AG04450 (cell line): ENCODE measurements at regions of chr18 and their contacts with region 1.

Region 1: DNA sequence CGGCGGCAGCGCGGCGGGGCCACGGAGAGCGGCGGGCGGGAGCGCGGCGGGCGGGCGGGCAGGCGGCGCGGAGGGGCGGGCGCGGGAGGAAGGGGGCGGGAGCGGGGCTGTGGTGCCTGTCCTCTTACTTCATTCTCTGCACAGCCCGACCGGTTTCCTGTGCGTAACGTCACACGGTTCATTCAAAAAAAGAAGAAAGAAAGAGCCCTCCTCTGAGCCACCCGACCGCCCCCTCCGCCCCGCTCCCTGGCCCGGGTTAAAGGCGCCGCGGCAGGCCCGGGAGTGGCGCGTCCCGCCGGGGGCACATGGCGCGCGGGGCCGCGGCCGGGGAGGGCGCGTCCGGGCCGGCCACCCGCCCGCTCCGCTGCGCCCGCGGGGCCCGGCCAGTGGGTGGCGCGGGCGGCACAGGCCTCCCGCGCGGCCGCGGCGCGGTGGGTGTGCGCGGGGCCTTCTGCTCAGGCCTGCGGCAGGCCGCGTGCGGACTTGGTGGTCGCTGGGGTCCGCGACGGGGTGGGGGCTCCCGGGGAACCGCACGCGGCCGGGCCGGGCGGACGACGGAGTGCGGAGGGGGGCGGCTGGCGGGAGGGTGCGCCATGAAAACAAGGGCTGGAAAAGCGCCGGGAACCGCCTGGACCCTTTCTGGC is 599 bp upstream of the BCL2 start:
- DNase-seq: peak; percentile 41
- H3K4me3 ChIP-seq: peak overlapping the region; percentile 70
- H3K27ac ChIP-seq: no peak overlapping the region
- H3K27me3 ChIP-seq: peaks cover 19% of the 10 kb centered on the region
- CTCF ChIP-seq: no peak

Region 2: GRCh38 chr18:63016270-63016669 is 303.9 kb before region 1 on chr18:
- CTCF ChIA-PET with region 1: interaction called, 77 read pairs
- POLR2A ChIA-PET with region 1: interaction called, 4 read pairs
- DNase-seq: peak; percentile 15
- H3K4me3 ChIP-seq: no peak overlapping the region
- H3K27ac ChIP-seq: no peak overlapping the region
- H3K27me3 ChIP-seq: peaks cover 7% of the 10 kb centered on the region
- CTCF ChIP-seq: peak; percentile 86

Region 3: DNA sequence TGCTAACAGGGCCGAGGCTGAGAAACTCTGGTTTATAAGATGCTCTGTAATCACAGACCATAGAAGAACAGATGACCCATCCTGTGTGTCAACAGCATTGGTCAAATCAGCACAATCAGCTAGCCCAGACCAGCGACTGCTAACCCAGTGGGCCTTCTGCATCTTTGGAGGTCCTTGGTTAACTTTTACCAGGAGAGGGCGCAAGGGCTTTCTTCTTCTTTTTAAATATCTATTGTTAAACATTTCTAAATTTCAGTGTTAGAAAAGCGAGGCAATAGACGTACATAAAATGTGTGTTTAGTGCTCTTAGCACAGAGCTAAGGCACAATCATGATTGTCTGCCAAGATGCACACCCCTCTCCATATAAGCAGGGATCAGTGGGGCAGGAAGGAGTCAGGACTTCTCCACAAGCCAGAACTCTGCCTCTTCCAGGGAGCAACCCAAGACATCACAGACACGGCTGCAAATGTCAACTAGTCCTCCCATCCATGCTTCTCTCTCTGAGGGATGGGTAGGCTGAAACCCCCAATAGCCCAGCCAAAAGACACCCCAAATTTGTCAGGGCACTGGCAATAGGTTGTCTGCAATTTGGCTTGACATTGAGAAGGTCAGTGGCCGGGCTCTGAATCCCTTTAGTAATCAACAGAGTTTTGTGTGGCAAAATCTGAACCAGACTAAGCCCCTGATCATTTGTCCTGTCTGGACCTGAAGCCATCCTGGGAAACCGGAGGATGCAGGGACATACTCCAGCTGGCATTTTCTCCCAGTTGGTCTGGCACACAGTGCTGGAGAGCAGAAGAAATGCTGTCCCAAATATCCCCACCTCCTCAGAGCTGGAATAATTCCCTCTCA is 188.8 kb before region 1 on chr18:
- CTCF ChIA-PET with region 1: interaction called, 148 read pairs
- POLR2A ChIA-PET with region 1: no interaction called
- DNase-seq: peak; percentile 16
- H3K4me3 ChIP-seq: no peak overlapping the region
- H3K27ac ChIP-seq: no peak overlapping the region
- H3K27me3 ChIP-seq: peaks cover 14% of the 10 kb centered on the region
- CTCF ChIP-seq: peak; percentile 74

Region 4: DNA sequence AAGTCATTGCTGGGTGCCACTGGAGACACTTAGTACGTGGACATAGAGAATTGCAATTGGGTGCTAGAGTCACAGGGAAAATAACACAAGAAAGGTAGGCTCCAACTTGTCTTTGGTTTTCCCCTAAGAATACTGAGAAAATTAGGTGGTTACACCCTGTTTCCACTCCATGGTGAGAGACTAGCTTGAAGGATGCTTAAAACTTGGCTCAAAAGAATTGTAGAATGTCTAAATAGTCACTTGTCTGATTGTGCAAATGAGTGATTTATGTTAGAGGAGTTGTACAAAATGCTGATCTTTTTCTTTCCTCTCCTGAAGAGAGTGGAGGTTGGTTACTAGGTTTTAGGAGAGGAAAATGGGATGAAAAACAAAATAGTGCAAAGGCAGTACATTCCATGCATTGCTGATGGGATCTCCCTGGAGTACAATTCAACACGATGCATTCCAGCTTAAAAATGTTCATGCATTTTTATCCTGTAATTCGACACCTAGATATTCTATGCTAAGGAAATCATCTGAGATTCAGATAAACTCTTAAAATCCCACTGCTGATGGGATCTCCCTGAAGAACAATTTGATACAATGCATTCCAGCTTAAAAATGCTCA is 219.8 kb after region 1 on chr18:
- CTCF ChIA-PET with region 1: no interaction called
- POLR2A ChIA-PET with region 1: no interaction called
- DNase-seq: no peak
- H3K4me3 ChIP-seq: no peak overlapping the region
- H3K27ac ChIP-seq: no peak overlapping the region
- H3K27me3 ChIP-seq: peaks cover 3% of the 10 kb centered on the region
- CTCF ChIP-seq: no peak